ENCODE measurements at regions of chr3 and their contacts with region 1.

Region 1: DNA sequence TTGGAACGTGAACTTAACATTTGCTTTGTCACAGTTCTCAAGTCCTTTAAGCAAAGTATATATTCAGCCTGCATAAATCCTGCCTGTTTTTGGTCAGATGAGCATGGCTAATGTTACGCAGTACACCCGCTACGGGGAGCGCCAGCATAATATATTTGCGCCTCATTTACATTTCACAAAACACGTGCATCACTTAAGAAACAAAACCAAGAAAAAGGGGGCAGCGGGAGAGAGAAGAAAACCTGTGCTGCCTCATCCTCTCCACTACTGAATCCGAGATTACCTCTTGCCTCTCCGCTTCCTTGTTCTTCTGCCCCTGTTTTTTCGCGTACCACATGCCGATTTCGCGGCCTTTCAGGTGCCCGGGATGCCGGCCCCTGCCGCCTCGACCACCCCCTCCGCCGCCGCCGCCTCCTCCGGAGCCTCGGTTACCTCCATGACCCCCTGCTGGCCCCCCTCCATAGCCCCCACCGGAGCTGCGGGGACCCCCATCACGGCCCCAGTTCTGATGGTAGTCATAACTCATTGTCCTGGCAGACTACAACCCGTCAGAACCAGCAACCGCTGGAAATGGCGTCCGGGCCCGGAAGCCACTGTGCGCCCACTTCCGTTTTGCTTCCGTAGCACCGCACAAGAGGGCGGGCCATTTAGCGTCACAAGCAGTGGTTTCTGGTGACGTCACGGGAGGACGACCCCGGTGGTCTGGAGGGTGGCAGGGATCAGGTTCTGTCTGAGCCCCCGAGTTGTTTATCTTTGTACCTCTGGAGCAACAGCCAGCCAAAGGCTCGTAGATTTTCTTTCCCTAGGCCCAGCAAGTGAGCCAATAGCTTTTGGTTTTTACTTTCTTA is at the start of gene DHX36:
- DNase-seq: peak; percentile 94
- ATAC-seq: peak; percentile 90
- H3K4me3 ChIP-seq: peak within 1 kb of the TSS; percentile 80 to 92 (median 88)
- H3K4me3 Mint-ChIP-seq: peak within 1 kb of the TSS; percentile 98
- H3K27ac ChIP-seq: peak within 1 kb of the TSS; percentile 94 to 98
- H3K27ac Mint-ChIP-seq: peak within 1 kb of the TSS; percentile 98
- H3K4me1 ChIP-seq: peaks cover 42 to 44% of the 10 kb centered on the region in 2 donors
- H3K4me1 Mint-ChIP-seq: peaks cover 38% of the 10 kb centered on the region
- H3K27me3 ChIP-seq: no peaks in the 10 kb centered on the region
- H3K27me3 Mint-ChIP-seq: peaks cover 3% of the 10 kb centered on the region
- CTCF ChIP-seq: no peak
- total RNA-seq, gene DHX36: 113 and 132 TPM in 2 replicates

Region 2: GRCh38 chr3:154243353-154243752 is 80.8 kb before region 1 on chr3:
- CTCF ChIA-PET with region 1: no interaction called
- POLR2A ChIA-PET with region 1: no interaction called
- intact Hi-C with region 1: no loop called
- DNase-seq: no peak
- ATAC-seq: no peak
- H3K4me3 ChIP-seq: no peak overlapping the region
- H3K4me3 Mint-ChIP-seq: no peak overlapping the region
- H3K27ac ChIP-seq: no peak overlapping the region
- H3K27ac Mint-ChIP-seq: no peak overlapping the region
- H3K4me1 ChIP-seq: no peaks in the 10 kb centered on the region
- H3K4me1 Mint-ChIP-seq: no peaks in the 10 kb centered on the region
- H3K27me3 ChIP-seq: no peaks in the 10 kb centered on the region
- H3K27me3 Mint-ChIP-seq: peaks cover 8% of the 10 kb centered on the region
- CTCF ChIP-seq: no peak

Region 3: DNA sequence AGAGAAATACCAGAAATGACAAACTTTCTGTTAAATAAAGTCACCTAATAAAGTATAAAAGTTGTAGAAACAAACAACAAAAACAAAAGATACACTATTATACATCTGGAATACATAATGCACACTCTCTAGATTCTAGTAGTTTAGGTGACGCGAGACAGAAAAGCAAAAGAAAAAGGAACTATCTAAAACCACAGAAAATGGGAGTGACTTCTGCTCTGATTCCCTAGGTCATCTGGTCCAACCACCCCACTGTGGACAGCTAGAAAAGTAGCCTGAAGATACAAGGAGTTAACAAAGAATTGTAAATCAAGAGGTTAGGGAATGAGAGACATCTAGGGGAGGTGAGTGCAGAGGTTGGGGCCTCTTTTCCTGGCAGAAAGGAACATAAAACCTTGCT is 38.9 kb before region 1 on chr3:
- CTCF ChIA-PET with region 1: interaction called, 3 read pairs
- POLR2A ChIA-PET with region 1: no interaction called
- intact Hi-C with region 1: loop called (anchors 5 kb)
- DNase-seq: no peak
- ATAC-seq: no peak
- H3K4me3 ChIP-seq: no peak overlapping the region
- H3K4me3 Mint-ChIP-seq: no peak overlapping the region
- H3K27ac ChIP-seq: peak overlapping the region in 1 of 2 donors; percentile 26
- H3K27ac Mint-ChIP-seq: peak overlapping the region; percentile 56
- H3K4me1 ChIP-seq: no peaks in the 10 kb centered on the region
- H3K4me1 Mint-ChIP-seq: peaks cover 5% of the 10 kb centered on the region
- H3K27me3 ChIP-seq: no peaks in the 10 kb centered on the region
- H3K27me3 Mint-ChIP-seq: no peaks in the 10 kb centered on the region
- CTCF ChIP-seq: no peak

Region 4: GRCh38 chr3:155805802-155806618 is 1481.9 kb after region 1 on chr3 and contains the start of gene C3orf33:
- CTCF ChIA-PET with region 1: no interaction called
- POLR2A ChIA-PET with region 1: no interaction called
- intact Hi-C with region 1: loop called (anchors 5 kb)
- DNase-seq: peak; percentile 85
- ATAC-seq: peak; percentile 95
- H3K4me3 ChIP-seq: peak within 1 kb of the TSS; percentile 30 to 80 (median 69)
- H3K4me3 Mint-ChIP-seq: peak within 1 kb of the TSS; percentile 92
- H3K27ac ChIP-seq: peak within 1 kb of the TSS; percentile 59 to 80
- H3K27ac Mint-ChIP-seq: peak within 1 kb of the TSS; percentile 75
- H3K4me1 ChIP-seq: peaks cover 3 to 12% of the 10 kb centered on the region in 2 donors
- H3K4me1 Mint-ChIP-seq: peaks cover 5% of the 10 kb centered on the region
- H3K27me3 ChIP-seq: peaks cover 0 to 2% (median 0%) of the 10 kb centered on the region in 4 experiments
- H3K27me3 Mint-ChIP-seq: peaks cover 15% of the 10 kb centered on the region
- CTCF ChIP-seq: peak; percentile 94
- total RNA-seq, gene C3orf33: 1.7 and 1.8 TPM in 2 replicates